RWPE1 (cell line): ENCODE measurements at regions of chr9 and their contacts with region 1.

Region 1: DNA sequence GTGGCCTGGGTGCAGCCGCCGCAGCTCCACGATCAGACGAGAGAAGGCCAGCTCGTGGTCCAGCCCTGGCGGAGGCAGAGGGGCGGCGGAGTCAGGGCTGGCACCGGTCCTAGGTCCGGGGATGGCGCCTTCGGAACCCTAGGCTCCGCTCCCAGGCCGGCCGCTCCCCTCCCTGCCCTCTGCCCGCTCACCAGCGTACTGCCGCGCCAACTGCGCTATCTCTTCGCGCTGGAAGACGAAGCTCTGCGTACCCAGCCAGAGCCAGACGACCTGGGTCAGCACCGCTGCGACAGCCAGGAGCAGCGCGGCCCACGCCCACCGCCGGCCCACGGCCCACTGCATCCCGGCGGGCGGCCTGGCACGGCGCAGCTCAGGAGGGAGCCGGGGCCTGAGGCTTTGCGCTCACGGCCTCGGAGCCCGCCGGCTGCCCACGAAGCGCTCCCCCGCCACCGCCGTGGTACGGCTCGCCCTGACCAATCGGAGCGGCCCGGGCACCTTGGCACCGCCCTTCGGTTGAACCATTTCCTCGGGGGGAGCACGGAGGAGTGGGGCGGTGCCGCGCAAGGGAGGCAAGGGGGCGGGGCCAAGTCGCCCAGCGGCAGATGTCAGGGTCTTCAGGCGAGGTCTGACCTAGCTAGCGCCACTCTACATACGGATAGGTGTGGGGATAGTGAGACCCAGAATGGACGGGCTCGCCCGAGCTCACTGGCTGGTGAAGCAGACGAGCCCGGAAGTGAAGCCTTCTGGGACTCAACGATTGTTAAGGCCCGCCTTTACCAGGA is at the start of gene SIGMAR1:
- DNase-seq: peak; percentile 98
- H3K27ac ChIP-seq: peak within 1 kb of the TSS; percentile 79
- CTCF ChIP-seq: no peak

Region 2: GRCh38 chr9:34603610-34604231 is 33.8 kb before region 1 on chr9:
- CTCF ChIA-PET with region 1: interaction called, 6 read pairs
- POLR2A ChIA-PET with region 1: interaction called, 11 read pairs
- DNase-seq: peak; percentile 87
- H3K27ac ChIP-seq: no peak overlapping the region
- CTCF ChIP-seq: peak; percentile 98

Region 3: DNA sequence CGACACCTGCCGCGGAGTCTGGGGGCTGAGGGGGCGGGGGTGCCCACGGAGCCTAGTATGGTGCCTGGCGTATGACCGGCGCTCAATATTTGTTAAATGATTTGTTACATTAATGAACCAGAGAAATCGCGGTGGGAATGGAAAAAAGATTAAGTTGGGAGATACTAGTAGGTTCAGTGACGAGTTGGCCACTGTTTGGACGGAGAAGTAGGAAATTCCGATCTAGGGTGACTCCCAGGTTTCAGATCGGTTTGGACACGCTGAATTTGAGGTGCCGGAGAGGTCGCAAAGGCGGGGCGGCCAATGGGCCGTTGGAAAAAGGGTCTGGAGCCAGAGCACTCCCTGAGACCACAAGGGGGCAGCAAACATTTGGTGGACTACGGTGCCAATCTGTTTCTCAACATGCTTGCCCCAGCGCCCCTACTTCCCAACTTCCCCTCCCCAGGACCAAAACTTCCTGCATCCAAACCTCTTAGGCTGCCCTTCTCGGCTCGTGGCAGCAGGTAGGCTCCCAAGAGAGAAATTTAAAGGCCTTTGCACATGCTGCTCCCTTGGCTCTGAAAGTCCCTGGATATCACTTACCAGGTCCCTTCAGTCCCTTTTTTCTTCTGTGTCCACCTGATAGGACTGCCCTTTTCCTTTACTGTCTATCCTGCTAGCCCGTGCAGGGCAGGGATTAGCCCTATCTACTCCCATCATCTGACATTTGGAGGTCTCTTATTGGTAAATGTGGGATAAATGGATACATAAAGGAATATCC is 24.7 kb before region 1 on chr9:
- CTCF ChIA-PET with region 1: interaction called, 12 read pairs
- POLR2A ChIA-PET with region 1: interaction called, 8 read pairs
- DNase-seq: peak; percentile 92
- H3K27ac ChIP-seq: peak overlapping the region; percentile 95
- CTCF ChIP-seq: peak; percentile 99

Region 4: GRCh38 chr9:34624475-34625185 is 12.9 kb before region 1 on chr9:
- CTCF ChIA-PET with region 1: interaction called, 10 read pairs
- POLR2A ChIA-PET with region 1: interaction called, 3 read pairs
- DNase-seq: no peak
- H3K27ac ChIP-seq: no peak overlapping the region
- CTCF ChIP-seq: no peak

Region 5: GRCh38 chr9:34659592-34660535 is 22.3 kb after region 1 on chr9:
- CTCF ChIA-PET with region 1: interaction called, 10 read pairs
- POLR2A ChIA-PET with region 1: no interaction called
- DNase-seq: peak; percentile 48
- H3K27ac ChIP-seq: 0 out of 2 replicates have a peak overlapping the region, but pooled peaks have one; percentile 2
- CTCF ChIP-seq: no peak

Region 6: DNA sequence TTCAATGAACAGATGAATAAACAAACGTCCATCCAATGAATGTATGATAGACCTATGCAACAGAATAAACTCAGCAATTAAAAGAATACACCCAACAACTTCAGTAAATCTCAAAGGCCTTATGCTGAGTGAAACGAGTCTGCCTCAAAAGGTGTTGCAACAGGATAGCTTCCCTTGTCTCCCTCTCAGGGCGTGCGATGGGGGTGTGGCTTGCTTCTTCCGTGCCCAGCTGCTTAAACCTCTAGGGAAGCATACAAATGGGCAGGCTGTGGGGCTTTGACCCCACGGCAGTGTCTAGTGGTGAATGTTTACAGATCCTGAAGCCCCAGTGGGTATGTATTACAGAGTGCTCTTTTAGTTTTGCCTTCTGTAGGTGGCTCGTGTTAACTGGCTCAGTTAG is 159.4 kb after region 1 on chr9:
- CTCF ChIA-PET with region 1: no interaction called
- POLR2A ChIA-PET with region 1: interaction called, 10 read pairs
- DNase-seq: no peak
- H3K27ac ChIP-seq: no peak overlapping the region
- CTCF ChIP-seq: no peak

Region 7: GRCh38 chr9:35415386-35416096 is 778.0 kb after region 1 on chr9:
- CTCF ChIA-PET with region 1: no interaction called
- POLR2A ChIA-PET with region 1: no interaction called
- DNase-seq: no peak
- H3K27ac ChIP-seq: no peak overlapping the region
- CTCF ChIP-seq: no peak